ENCODE measurements at regions of chr14 and their contacts with region 1.

Region 1: DNA sequence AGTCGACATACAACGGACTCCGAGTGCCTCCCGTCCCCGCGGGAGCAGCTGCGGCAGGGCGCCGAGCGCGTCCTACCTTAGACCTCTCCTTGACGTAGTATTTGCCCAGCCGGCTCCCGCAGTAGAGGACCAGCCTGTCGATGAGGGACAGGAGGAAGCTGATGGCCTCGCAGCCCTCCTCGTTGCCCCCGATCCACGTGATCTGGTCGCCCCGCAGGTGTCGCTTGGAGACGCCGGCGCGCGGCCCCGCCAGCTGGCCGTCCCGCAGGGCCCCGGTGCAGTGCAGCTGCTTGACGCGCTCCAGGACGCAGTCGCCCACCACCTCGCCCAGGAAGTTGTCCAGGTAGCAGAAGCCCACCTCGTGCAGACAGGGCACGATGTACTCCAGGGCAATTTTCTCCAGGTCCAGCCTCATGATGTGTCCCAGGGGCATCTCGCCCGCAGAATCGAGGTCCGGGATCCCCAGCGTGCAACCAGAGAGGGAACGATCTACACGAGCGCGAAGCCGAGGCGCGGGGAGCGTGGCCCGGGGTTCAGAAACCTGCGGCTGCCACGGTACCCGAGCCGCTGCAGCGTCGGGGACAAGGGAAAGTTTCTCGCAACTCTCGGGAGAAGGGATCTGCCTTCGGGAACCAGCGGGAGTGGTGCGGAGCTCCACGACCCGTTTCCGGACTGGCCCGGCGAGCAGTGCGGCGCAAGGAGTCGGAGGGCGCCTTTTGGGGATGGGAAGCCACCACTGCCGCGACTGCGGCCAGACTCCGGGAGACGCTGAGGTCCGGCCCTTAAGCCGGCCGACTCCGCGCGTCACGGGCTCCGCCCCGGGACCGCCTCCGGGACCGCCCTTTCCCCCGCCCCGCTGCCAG is at the start of gene EGLN3:
- DNase-seq: peak; percentile 68
- H3K4me3 Mint-ChIP-seq: peak within 1 kb of the TSS; percentile 79
- H3K27ac Mint-ChIP-seq: no peak within 1 kb of the TSS
- H3K4me1 Mint-ChIP-seq: peaks cover 41% of the 10 kb centered on the region
- H3K27me3 Mint-ChIP-seq: peaks cover 50% of the 10 kb centered on the region
- total RNA-seq, gene EGLN3: 16.0 and 17.0 TPM in 2 replicates

Region 2: DNA sequence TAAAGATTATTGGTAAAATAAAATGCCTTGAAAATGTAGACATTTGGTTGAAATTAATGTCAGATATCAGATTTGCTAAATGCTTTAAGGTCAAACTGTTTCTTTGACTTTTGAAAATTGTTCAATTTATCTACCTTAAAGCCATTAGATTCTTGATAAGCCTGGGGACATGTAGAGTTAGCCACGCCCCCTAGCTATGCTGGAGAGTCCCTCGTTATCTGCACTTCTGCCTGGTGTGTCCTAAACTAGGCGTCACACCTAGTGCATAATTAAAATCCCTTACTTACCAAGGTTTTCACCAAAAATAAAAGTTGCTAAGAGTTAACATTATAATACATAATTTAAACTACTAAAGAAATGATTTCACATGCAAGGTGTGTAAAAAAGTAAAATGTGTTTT is 79.2 kb before region 1 on chr14:
- intact Hi-C with region 1: no loop called
- DNase-seq: no peak
- H3K4me3 Mint-ChIP-seq: no peak overlapping the region
- H3K27ac Mint-ChIP-seq: no peak overlapping the region
- H3K4me1 Mint-ChIP-seq: no peaks in the 10 kb centered on the region
- H3K27me3 Mint-ChIP-seq: peaks cover 9% of the 10 kb centered on the region

Region 3: DNA sequence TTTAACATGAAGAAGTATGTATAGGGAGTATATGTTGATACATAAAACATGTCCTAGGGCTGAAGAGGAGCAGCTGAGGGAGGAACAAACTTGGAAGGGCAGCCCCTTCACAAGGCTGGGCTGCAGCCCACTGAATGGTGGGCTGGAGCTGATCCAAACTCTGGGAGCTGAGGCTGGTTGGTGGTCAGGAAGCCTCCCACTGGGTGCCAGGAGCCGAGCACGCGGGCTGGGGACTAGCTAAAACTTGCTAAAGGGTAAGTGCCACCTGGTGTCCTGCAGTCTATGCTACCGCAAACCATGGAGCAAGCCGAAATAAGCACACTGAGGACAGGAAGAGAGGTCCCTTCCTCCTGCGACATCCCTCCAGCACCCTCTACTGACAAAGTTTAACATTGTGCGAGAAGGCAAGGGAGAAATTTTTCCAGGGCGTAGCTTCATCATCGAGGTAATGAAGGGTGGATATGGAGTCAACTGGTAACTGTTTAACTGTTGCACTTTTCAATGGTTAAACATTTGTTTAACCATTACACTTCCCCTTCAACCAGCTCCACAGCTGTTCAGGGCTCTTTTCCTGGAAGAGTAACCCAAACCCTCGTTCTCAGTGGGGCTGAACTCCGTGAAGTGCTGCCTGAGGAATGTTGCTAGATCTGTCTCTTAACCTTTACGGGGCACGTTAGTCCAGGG is 41.9 kb before region 1 on chr14:
- intact Hi-C with region 1: no loop called
- DNase-seq: no peak
- H3K4me3 Mint-ChIP-seq: no peak overlapping the region
- H3K27ac Mint-ChIP-seq: no peak overlapping the region
- H3K4me1 Mint-ChIP-seq: no peaks in the 10 kb centered on the region
- H3K27me3 Mint-ChIP-seq: peaks cover 31% of the 10 kb centered on the region

Region 4: DNA sequence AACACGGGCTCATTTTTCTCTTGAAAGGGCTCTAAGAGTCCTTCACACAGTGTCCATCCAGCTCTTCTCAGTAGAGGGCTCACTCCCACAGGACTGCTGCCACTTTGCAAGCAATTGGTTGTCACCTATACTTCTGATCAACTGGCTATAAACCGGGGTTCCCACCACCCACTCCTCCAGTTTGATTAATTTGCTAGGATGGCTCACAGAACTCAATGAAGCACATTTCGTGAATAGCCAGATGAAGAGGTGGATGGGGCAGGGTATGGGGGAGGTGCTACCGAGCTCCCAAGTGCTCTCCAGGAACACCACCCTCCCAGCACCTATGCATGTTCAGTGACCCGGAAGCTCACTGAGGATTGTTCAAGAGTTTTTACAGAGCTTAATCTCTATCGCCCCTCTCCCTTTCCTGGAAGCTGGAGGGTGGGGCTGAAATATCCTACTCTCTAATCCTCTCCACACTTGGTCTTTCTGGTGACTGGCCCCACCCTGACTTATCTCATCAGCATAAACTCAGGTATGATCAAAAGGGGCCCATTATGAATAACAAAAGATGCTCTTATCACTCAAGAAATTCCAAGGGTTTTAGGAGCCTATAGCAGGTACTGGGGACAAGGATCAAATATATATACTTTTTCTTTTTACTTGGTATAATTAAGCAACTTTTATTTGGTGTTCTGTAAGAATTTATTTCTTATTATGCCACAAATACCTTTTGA is 14.2 kb after region 1 on chr14:
- intact Hi-C with region 1: loop called (anchors 2 kb)
- DNase-seq: no peak
- H3K4me3 Mint-ChIP-seq: no peak overlapping the region
- H3K27ac Mint-ChIP-seq: no peak overlapping the region
- H3K4me1 Mint-ChIP-seq: peaks cover 21% of the 10 kb centered on the region
- H3K27me3 Mint-ChIP-seq: peaks cover 15% of the 10 kb centered on the region

Region 5: GRCh38 chr14:34030864-34031263 is 80.3 kb after region 1 on chr14:
- intact Hi-C with region 1: no loop called
- DNase-seq: no peak
- H3K4me3 Mint-ChIP-seq: no peak overlapping the region
- H3K27ac Mint-ChIP-seq: no peak overlapping the region
- H3K4me1 Mint-ChIP-seq: peaks cover 14% of the 10 kb centered on the region
- H3K27me3 Mint-ChIP-seq: peaks cover 2% of the 10 kb centered on the region

Region 6: DNA sequence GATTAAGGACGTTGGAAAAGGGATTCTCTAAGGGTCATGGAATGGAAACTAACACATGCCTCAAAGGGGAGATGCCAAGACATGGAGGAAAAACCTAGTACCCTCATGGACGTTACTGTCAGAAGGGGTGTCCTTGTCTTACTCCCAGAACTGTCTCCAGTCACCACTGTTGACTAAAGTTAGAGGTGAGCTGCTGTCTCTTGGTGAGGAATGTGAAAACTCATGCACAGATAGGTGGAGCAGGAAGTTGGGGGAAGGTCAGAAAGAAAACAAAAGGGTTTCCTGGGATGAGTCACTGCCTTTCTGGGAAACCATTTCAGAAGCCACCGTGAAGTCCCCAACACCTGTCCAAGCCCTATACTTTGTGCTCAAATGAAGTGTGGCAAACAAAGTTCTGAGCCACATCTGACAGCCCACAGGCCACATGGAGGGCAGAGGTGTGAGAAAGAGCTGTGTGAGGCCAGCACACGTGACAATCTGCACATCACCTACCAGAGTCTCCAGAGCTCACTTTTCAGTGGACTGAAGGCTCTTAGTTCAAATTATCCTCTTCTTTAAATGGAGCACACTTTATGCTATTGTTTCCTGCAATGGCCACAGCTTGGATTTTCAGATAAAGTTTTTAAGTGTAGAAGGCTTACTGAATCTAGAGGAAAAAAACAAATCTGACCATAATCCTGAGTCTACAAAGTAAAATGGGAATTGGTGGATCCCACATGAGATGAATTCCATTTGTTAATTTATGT is 93.2 kb after region 1 on chr14:
- intact Hi-C with region 1: loop called (anchors 5 kb)
- DNase-seq: peak; percentile 83
- H3K4me3 Mint-ChIP-seq: peak overlapping the region; percentile 61
- H3K27ac Mint-ChIP-seq: peak overlapping the region; percentile 82
- H3K4me1 Mint-ChIP-seq: peaks cover 68% of the 10 kb centered on the region
- H3K27me3 Mint-ChIP-seq: no peaks in the 10 kb centered on the region

Region 7: GRCh38 chr14:34098045-34098984 is 147.8 kb after region 1 on chr14:
- intact Hi-C with region 1: loop called (anchors 2 kb)
- DNase-seq: peak; percentile 14
- H3K4me3 Mint-ChIP-seq: no peak overlapping the region
- H3K27ac Mint-ChIP-seq: no peak overlapping the region
- H3K4me1 Mint-ChIP-seq: peaks cover 57% of the 10 kb centered on the region
- H3K27me3 Mint-ChIP-seq: peaks cover 2% of the 10 kb centered on the region

Region 8: DNA sequence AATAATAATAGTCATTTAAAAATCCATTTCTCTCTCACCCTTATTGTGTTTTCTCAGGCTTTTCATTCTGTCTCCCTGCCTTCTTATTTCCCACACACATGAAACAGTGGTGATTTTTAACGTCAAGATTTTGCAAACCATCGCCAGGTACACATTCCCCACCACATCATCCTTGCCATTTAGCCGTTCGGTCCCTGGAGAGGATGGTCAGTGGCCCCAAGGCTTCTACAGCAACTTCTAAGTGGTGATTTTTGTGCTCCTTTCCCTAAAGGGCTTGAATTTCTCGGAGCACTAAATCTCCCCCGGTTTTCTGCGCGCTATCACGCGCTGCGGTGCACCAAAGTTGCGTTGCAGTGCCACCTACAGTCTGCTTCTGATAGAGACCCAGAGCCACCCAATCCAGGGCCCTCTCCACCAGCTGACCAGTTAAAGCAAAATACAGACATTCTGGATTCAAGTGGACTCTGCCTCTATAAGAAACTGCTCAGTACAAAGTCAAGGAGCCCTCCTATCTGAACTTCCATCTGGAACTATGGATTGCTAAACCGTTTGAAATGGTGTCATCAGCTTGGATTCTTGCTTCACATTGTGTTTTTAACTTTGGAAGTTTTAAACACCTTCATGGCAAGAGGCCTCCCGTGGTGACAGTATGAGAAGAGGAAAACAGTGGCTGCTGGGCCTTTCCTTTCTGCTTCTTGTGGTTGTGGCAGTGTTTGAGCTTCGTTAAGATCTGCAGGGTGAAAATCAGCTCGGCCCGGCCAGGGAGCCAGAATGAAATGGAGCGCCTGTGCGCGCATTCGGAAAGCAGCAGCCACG is 277.5 kb after region 1 on chr14:
- intact Hi-C with region 1: loop called (anchors 2 kb)
- DNase-seq: peak; percentile 50
- H3K4me3 Mint-ChIP-seq: peak overlapping the region; percentile 35
- H3K27ac Mint-ChIP-seq: no peak overlapping the region
- H3K4me1 Mint-ChIP-seq: peaks cover 20% of the 10 kb centered on the region
- H3K27me3 Mint-ChIP-seq: peaks cover 37% of the 10 kb centered on the region